PC-3 (cell line): ENCODE measurements at regions of chr1 and their contacts with region 1.

Region 1: GRCh38 chr1:225361176-225361575 is 66.7 kb downstream of the LBR start:
- DNase-seq: peak; percentile 74
- ATAC-seq: peak; percentile 96
- H3K4me3 ChIP-seq: no peak overlapping the region
- H3K27ac ChIP-seq: peak overlapping the region; percentile 43; the same call in 1 of the 2 replicates
- H3K4me1 ChIP-seq: peaks cover 15% of the 10 kb centered on the region
- H3K27me3 ChIP-seq: no peaks in the 10 kb centered on the region
- CTCF ChIP-seq: no peak

Region 2: DNA sequence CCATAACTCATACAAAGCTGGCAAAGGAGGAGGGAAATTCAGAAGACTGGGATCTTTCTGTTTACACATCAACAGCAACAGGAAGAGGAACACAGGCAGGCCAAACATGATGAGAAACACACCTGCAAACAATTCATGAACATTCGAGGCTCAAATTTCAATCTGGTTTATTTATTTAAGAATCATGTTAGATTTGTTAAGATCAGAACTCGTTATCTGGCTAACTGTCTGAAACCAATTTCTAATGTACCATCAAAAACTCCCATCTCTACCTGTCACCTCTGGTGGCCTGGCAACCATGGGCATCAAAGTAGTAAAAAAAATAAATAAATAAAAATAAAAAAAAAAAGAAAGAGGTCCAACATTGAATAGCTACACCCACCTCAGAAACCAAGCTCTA is 56.9 kb after region 1 on chr1:
- CTCF ChIA-PET with region 1: no interaction called
- POLR2A ChIA-PET with region 1: no interaction called
- intact Hi-C with region 1: no loop called
- DNase-seq: no peak
- ATAC-seq: peak; percentile 48
- H3K4me3 ChIP-seq: no peak overlapping the region
- H3K27ac ChIP-seq: no peak overlapping the region
- H3K4me1 ChIP-seq: peaks cover 22% of the 10 kb centered on the region
- H3K27me3 ChIP-seq: no peaks in the 10 kb centered on the region
- CTCF ChIP-seq: no peak

Region 3: GRCh38 chr1:225428068-225428880 is 67.1 kb after region 1 on chr1:
- CTCF ChIA-PET with region 1: no interaction called
- POLR2A ChIA-PET with region 1: no interaction called
- intact Hi-C with region 1: loop called (anchors 2 kb)
- DNase-seq: peak; percentile 97
- ATAC-seq: peak; percentile 77
- H3K4me3 ChIP-seq: peak overlapping the region; percentile 89
- H3K27ac ChIP-seq: peak overlapping the region; percentile 69
- H3K4me1 ChIP-seq: peaks cover 39% of the 10 kb centered on the region
- H3K27me3 ChIP-seq: no peaks in the 10 kb centered on the region
- CTCF ChIP-seq: no peak